ENCODE measurements at regions of chr20 and their contacts with region 1.

Region 1: GRCh38 chr20:62182613-62183425 is at the start of gene MTG2:
- DNase-seq: peak; percentile 95
- ATAC-seq: peak; percentile 97 to 99 (median 98)
- H3K4me3 ChIP-seq: peak within 1 kb of the TSS; percentile 51 to 98 (median 92)
- H3K27ac ChIP-seq: peak within 1 kb of the TSS; percentile 79 to 98 (median 94)
- H3K4me1 ChIP-seq: peaks cover 0 to 52% (median 29%) of the 10 kb centered on the region in 9 donors
- H3K27me3 ChIP-seq: no peaks in the 10 kb centered on the region
- CTCF ChIP-seq: peak in 2 of 9 donors; percentile 13 to 15
- total RNA-seq, gene MTG2: 21.5 to 30.4 (median 28.2) TPM

Region 2: DNA sequence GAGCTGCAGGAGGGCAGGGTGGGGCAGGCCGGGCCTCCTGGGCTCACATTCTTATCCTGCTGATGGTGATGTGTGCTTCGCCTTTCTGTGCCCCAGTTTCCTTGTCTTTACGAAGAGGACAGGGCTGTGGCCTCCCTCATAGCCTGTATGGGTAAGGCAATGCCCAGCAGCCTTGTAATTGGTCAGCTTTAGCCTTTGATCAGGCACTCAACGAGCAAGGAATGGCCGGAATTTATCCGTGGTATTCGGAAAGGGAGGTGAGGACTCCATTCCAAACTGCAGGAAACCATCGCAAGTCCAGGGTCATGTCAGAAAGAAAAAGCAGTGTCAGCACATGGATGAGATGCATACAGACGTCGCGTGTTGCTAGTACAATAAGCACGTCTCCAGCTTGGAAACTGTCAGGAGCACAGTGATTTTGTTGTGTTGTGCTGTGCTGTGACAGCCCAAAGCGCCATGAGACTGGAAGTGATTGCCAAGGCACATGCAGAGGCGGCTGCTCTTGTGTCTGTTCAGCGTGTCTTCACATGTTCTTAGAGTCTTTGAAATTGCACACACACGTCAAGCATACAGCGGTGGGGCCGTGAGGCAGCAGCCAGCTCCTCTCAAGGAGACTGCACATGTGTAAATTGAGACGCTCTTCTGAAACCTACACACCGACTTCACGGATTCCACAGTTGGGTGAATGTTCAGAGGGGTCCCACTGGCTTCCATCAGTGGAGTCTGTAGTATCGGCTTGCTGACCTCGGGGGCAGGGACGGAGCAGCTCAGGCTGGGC is 33.1 kb before region 1 on chr20:
- intact Hi-C with region 1: loop called in 4 of 10 experiments (anchors 1 to 5 kb)
- DNase-seq: no peak
- ATAC-seq: peak in 2 of 8 donors; percentile 8 to 24
- H3K4me3 ChIP-seq: no peak overlapping the region
- H3K27ac ChIP-seq: peak overlapping the region in 3 of 10 donors; percentile 10 to 37 (median 11)
- H3K4me1 ChIP-seq: peaks cover 4 to 43% (median 27%) of the 10 kb centered on the region in 9 donors
- H3K27me3 ChIP-seq: no peaks in the 10 kb centered on the region
- CTCF ChIP-seq: no peak

Region 3: GRCh38 chr20:62237801-62238571 is 55.2 kb after region 1 on chr20 and contains the start of gene OSBPL2:
- intact Hi-C with region 1: loop called in 4 of 10 experiments (anchors 2 to 5 kb)
- DNase-seq: peak; percentile 98 to 99
- ATAC-seq: peak; percentile 93 to 99 (median 98)
- H3K4me3 ChIP-seq: peak within 1 kb of the TSS; percentile 60 to 89 (median 72)
- H3K27ac ChIP-seq: peak within 1 kb of the TSS; percentile 55 to 94 (median 90)
- H3K4me1 ChIP-seq: peaks cover 4 to 84% (median 48%) of the 10 kb centered on the region in 9 donors
- H3K27me3 ChIP-seq: peaks cover 0 to 2% (median 0%) of the 10 kb centered on the region in 7 donors
- CTCF ChIP-seq: no peak
- total RNA-seq, gene OSBPL2: 35.4 to 55.7 (median 41.7) TPM

Region 4: GRCh38 chr20:62244644-62245108 is 61.9 kb after region 1 on chr20:
- intact Hi-C with region 1: loop called in 3 of 10 experiments (anchors 2 to 5 kb)
- DNase-seq: no peak
- ATAC-seq: peak; percentile 3 to 79 (median 34)
- H3K4me3 ChIP-seq: peak overlapping the region in 1 of 10 donors; percentile 10
- H3K27ac ChIP-seq: peak overlapping the region in 8 of 10 donors; percentile 40 to 94 (median 76)
- H3K4me1 ChIP-seq: peaks cover 16 to 99% (median 76%) of the 10 kb centered on the region in 9 donors
- H3K27me3 ChIP-seq: no peaks in the 10 kb centered on the region
- CTCF ChIP-seq: no peak

Region 5: GRCh38 chr20:62285722-62286121 is 102.9 kb after region 1 on chr20:
- intact Hi-C with region 1: loop called in 1 of 10 experiments (anchors 10 kb)
- DNase-seq: peak; percentile 49 to 54
- ATAC-seq: peak; percentile 25 to 85 (median 40)
- H3K4me3 ChIP-seq: no peak overlapping the region
- H3K27ac ChIP-seq: peak overlapping the region in 9 of 10 donors; percentile 65 to 90 (median 73)
- H3K4me1 ChIP-seq: peaks cover 14 to 56% (median 30%) of the 10 kb centered on the region in 9 donors
- H3K27me3 ChIP-seq: no peaks in the 10 kb centered on the region
- CTCF ChIP-seq: no peak

Region 6: GRCh38 chr20:62296724-62297581 is 114.1 kb after region 1 on chr20:
- intact Hi-C with region 1: no loop called
- DNase-seq: no peak
- ATAC-seq: no peak
- H3K4me3 ChIP-seq: no peak overlapping the region
- H3K27ac ChIP-seq: no peak overlapping the region
- H3K4me1 ChIP-seq: peaks cover 0 to 10% (median 0%) of the 10 kb centered on the region in 9 donors
- H3K27me3 ChIP-seq: no peaks in the 10 kb centered on the region
- CTCF ChIP-seq: no peak

Region 7: GRCh38 chr20:62386383-62387218 is 203.8 kb after region 1 on chr20 and contains the start of gene RPS21:
- intact Hi-C with region 1: loop called in 2 of 10 experiments (anchors 10 kb)
- DNase-seq: peak; percentile 93 to 95
- ATAC-seq: peak; percentile 91 to 96 (median 95)
- H3K4me3 ChIP-seq: peak within 1 kb of the TSS; percentile 76 to 100 (median 92)
- H3K27ac ChIP-seq: peak within 1 kb of the TSS; percentile 79 to 99 (median 96)
- H3K4me1 ChIP-seq: peaks cover 9 to 47% (median 34%) of the 10 kb centered on the region in 9 donors
- H3K27me3 ChIP-seq: no peaks in the 10 kb centered on the region
- CTCF ChIP-seq: peak in 1 of 9 donors; percentile 12
- total RNA-seq, gene RPS21: 512 to 811 (median 576) TPM

Measured in heart right ventricle (tissue), 16 donors.